CD8-positive, alpha-beta T cell (primary cell): ENCODE measurements at regions of chr10 and their contacts with region 1.

Region 1: DNA sequence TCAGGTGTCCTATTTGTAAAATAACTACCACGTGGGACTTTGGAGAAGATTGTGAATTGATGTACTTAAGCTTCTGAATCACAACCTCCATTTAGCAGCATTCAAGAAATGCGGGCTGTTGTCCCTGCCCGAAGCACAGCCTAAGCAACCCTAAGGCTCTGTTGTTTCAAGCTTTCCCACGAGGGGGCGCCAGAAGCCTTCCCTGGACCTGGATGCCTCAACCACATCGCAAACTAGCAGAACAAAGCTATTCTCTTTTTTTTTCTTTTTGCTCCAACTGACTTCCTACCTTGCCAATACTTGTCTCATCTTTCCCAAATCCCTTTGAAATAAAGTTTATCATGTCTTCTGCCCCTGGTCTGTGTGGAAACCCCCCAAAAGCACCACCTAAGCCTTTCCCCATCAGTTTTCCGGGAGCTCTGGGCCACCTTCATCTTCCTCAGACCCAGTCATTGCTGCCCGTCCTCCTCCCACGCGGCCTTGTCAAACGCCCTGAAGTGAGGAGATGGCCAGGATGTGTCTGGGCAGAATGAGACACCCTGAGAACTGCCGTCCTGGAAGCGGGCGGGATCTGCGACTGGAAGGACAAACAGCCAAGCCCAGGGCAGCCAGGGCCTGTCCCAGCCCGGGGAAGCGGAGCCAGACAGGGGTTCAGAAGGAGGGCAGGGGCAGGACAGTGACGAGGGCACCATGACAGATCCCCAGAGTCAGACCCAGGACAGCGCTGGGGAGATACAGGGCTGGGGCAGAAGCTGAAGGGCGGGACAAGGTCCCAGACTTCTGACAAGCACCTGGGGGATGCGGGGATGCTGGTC is 112.7 kb downstream of the SLIT1 start:
- DNase-seq: peak; percentile 63 to 89 (median 79)
- ATAC-seq: peak; percentile 72
- H3K4me3 ChIP-seq: no peak overlapping the region
- H3K4me3 Mint-ChIP-seq: no peak overlapping the region
- H3K27ac ChIP-seq: no peak overlapping the region
- H3K27ac Mint-ChIP-seq: no peak overlapping the region
- H3K4me1 ChIP-seq: no peaks in the 10 kb centered on the region
- H3K4me1 Mint-ChIP-seq: peaks cover 5% of the 10 kb centered on the region
- H3K27me3 ChIP-seq: peaks cover 0 to 2% of the 10 kb centered on the region in 2 experiments
- H3K27me3 Mint-ChIP-seq: peaks cover 34% of the 10 kb centered on the region
- CTCF ChIP-seq: peak; percentile 82

Region 2: GRCh38 chr10:96596422-96597407 is 476.3 kb before region 1 on chr10:
- CTCF ChIA-PET with region 1: no interaction called
- POLR2A ChIA-PET with region 1: no interaction called
- intact Hi-C with region 1: no loop called
- DNase-seq: no peak
- ATAC-seq: no peak
- H3K4me3 ChIP-seq: no peak overlapping the region
- H3K4me3 Mint-ChIP-seq: no peak overlapping the region
- H3K27ac ChIP-seq: no peak overlapping the region
- H3K27ac Mint-ChIP-seq: no peak overlapping the region
- H3K4me1 ChIP-seq: no peaks in the 10 kb centered on the region
- H3K4me1 Mint-ChIP-seq: peaks cover 5% of the 10 kb centered on the region
- H3K27me3 ChIP-seq: no peaks in the 10 kb centered on the region
- H3K27me3 Mint-ChIP-seq: no peaks in the 10 kb centered on the region
- CTCF ChIP-seq: no peak

Region 3: GRCh38 chr10:97059006-97059871 is 13.8 kb before region 1 on chr10:
- CTCF ChIA-PET with region 1: interaction called, 17 read pairs
- POLR2A ChIA-PET with region 1: no interaction called
- intact Hi-C with region 1: no loop called
- DNase-seq: no peak
- ATAC-seq: no peak
- H3K4me3 ChIP-seq: no peak overlapping the region
- H3K4me3 Mint-ChIP-seq: no peak overlapping the region
- H3K27ac ChIP-seq: no peak overlapping the region
- H3K27ac Mint-ChIP-seq: no peak overlapping the region
- H3K4me1 ChIP-seq: no peaks in the 10 kb centered on the region
- H3K4me1 Mint-ChIP-seq: no peaks in the 10 kb centered on the region
- H3K27me3 ChIP-seq: no peaks in the 10 kb centered on the region
- H3K27me3 Mint-ChIP-seq: no peaks in the 10 kb centered on the region
- CTCF ChIP-seq: no peak

Region 4: DNA sequence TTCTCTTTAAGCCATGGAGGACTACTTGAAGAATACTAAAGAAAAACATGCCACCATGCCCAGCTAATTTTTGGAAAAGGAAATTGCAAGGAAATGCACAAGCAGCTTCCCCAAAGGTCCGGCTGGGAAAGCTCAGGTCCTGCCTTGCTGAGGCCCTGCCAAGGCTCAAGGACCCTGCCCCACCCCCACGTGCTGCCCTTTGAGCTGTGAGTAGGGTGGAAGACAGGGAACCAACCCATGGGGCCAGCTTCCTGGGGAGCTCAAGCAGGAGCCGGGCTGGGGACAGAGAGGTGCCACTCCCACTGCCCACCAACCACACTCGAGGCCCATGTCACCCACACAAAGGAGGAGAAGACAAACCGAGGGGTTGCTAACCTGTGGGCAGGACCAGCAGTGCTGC is 34.5 kb after region 1 on chr10:
- CTCF ChIA-PET with region 1: interaction called, 13 read pairs
- POLR2A ChIA-PET with region 1: no interaction called
- intact Hi-C with region 1: no loop called
- DNase-seq: no peak
- ATAC-seq: no peak
- H3K4me3 ChIP-seq: no peak overlapping the region
- H3K4me3 Mint-ChIP-seq: no peak overlapping the region
- H3K27ac ChIP-seq: no peak overlapping the region
- H3K27ac Mint-ChIP-seq: no peak overlapping the region
- H3K4me1 ChIP-seq: no peaks in the 10 kb centered on the region
- H3K4me1 Mint-ChIP-seq: peaks cover 5% of the 10 kb centered on the region
- H3K27me3 ChIP-seq: no peaks in the 10 kb centered on the region
- H3K27me3 Mint-ChIP-seq: peaks cover 2% of the 10 kb centered on the region
- CTCF ChIP-seq: no peak

Region 5: DNA sequence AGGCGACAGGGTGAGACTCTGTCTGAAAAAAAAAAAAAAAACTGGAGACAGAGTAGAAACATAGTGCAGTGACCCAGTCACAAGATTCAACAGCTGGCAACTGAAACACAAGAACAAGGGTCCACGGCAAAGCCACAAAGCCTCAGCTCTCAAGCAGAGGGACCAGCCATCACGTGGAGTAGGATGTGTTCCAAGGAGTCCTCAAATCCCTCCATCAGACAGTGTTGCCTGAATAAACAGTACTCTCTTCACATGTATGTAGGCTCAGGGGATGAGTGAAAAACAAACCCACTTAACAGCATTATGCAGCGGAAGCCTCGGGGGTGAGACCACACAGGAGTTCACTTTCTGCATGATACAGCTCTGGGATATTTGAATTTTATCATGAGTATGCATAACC is 50.7 kb after region 1 on chr10:
- CTCF ChIA-PET with region 1: interaction called, 19 read pairs
- POLR2A ChIA-PET with region 1: no interaction called
- intact Hi-C with region 1: no loop called
- DNase-seq: no peak
- ATAC-seq: no peak
- H3K4me3 ChIP-seq: no peak overlapping the region
- H3K4me3 Mint-ChIP-seq: no peak overlapping the region
- H3K27ac ChIP-seq: no peak overlapping the region
- H3K27ac Mint-ChIP-seq: no peak overlapping the region
- H3K4me1 ChIP-seq: no peaks in the 10 kb centered on the region
- H3K4me1 Mint-ChIP-seq: no peaks in the 10 kb centered on the region
- H3K27me3 ChIP-seq: no peaks in the 10 kb centered on the region
- H3K27me3 Mint-ChIP-seq: peaks cover 9% of the 10 kb centered on the region
- CTCF ChIP-seq: no peak

Region 6: DNA sequence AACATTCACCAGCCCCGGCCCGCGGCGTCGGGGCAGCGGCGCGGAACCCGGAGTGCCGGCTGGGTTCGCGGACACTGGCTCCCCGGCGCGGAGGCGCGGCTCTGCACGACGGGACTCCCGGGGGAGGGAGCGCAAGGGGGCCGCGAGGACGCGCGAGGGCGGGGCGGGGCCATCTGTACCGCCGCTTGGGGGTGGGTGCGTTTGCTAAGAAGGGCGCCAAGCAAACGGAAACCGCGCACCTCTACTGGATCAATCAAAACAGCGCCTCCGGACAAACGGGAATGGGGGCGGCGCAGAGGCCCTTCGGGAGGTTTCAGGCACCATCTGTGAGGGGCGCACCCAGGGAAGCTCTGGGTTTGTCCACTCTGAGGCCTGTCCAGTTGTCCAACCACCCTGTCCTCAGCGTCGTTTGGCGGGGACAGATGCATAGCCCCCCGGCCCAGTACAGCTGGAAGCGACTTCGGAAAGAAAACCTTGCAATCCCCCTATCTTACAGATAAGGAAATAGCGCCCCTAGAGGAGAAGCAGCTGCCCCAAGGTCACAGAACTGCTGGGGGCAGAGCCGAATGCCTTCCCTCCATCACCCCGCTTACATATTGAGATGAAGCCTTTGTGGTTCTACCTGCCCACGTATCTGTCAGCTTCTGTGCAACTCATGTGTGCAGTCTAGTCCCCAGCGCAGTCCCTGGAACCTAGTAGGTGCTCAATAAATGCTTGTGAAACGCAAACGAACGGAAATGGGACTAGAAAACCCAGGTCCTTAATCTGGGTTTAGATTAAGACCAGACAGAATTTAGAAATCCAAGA is 123.4 kb after region 1 on chr10:
- CTCF ChIA-PET with region 1: interaction called, 602 read pairs
- POLR2A ChIA-PET with region 1: no interaction called
- intact Hi-C with region 1: loop called in 1 of 2 experiments (anchors 1 kb)
- DNase-seq: peak; percentile 23 to 83 (median 67)
- ATAC-seq: peak; percentile 92
- H3K4me3 ChIP-seq: peak overlapping the region; percentile 62 to 86
- H3K4me3 Mint-ChIP-seq: peak overlapping the region; percentile 85
- H3K27ac ChIP-seq: no peak overlapping the region
- H3K27ac Mint-ChIP-seq: peak overlapping the region; percentile 22
- H3K4me1 ChIP-seq: peaks cover 7% of the 10 kb centered on the region
- H3K4me1 Mint-ChIP-seq: peaks cover 9% of the 10 kb centered on the region
- H3K27me3 ChIP-seq: peaks cover 0 to 4% of the 10 kb centered on the region in 2 experiments
- H3K27me3 Mint-ChIP-seq: peaks cover 12% of the 10 kb centered on the region
- CTCF ChIP-seq: peak; percentile 80

Region 7: DNA sequence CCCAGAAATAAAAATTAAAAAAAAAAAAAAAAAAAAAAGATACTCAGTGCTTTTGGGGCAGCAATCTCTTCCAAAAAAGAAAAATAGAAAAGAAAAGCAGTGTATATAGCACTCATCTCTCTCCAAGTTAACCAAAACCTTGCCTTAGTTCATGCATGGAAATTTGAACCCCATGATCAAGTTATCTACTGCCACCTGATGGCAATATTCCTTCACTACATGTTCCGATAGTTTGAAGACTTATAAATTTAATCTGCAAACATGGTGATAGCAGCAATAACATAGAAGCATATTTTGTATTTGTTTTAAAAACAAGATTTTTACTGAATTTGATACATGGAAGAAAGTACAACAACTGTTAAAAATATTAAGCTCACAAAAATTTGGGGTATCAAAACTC is 161.3 kb after region 1 on chr10:
- CTCF ChIA-PET with region 1: interaction called, 23 read pairs
- POLR2A ChIA-PET with region 1: no interaction called
- intact Hi-C with region 1: loop called in 1 of 2 experiments (anchors 1 kb)
- DNase-seq: peak in 2 of 9 experiments; percentile 17 to 33
- ATAC-seq: no peak
- H3K4me3 ChIP-seq: no peak overlapping the region
- H3K4me3 Mint-ChIP-seq: no peak overlapping the region
- H3K27ac ChIP-seq: no peak overlapping the region
- H3K27ac Mint-ChIP-seq: no peak overlapping the region
- H3K4me1 ChIP-seq: no peaks in the 10 kb centered on the region
- H3K4me1 Mint-ChIP-seq: no peaks in the 10 kb centered on the region
- H3K27me3 ChIP-seq: no peaks in the 10 kb centered on the region
- H3K27me3 Mint-ChIP-seq: no peaks in the 10 kb centered on the region
- CTCF ChIP-seq: peak; percentile 45